Caco-2 (cell line): ENCODE measurements at regions of chr10 and their contacts with region 1.

Region 1: DNA sequence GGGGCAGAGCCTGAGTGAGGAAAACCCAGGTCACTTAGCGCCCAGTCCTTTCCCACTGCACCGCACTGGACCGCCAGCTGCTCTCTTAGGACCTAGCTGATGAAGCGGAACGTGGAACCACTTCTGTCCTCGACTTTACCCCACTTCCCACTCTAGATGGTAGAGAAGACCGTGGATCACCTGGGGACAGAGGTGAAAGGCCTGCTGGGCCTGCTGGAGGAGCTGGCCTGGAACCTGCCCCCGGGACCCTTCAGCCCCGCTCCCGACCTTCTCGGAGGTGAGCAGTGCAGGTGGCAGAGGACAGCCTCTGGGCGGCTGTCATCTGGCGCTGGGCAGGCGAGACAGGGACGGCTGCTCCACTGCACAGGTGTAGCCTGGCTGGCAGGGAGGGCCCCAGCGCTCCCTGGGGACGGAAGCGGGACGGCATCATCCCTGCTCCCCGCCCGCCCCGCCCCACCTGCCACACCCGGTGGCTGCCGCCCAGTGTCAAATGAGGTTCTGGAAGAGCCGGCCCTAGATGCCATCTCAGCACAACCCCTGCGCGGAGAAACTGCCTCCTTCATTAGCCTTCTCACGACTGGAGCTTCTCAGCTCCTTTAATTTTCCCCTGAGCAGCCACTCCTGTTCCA is 11.7 kb downstream of the PLAC9 start:
- DNase-seq: peak; percentile 60 to 70
- H3K4me3 ChIP-seq: peak overlapping the region; percentile 30
- H3K4me3 Mint-ChIP-seq: peak overlapping the region; percentile 74
- H3K27ac Mint-ChIP-seq: peak overlapping the region; percentile 79
- H3K4me1 ChIP-seq: no peaks in the 10 kb centered on the region
- H3K4me1 Mint-ChIP-seq: peaks cover 8% of the 10 kb centered on the region
- H3K27me3 ChIP-seq: no peaks in the 10 kb centered on the region
- H3K27me3 Mint-ChIP-seq: peaks cover 2% of the 10 kb centered on the region
- CTCF ChIP-seq: no peak

Region 2: GRCh38 chr10:79286318-79286951 is 857.7 kb before region 1 on chr10:
- CTCF ChIA-PET with region 1: no interaction called
- POLR2A ChIA-PET with region 1: no interaction called
- intact Hi-C with region 1: no loop called
- DNase-seq: no peak
- H3K4me3 ChIP-seq: no peak overlapping the region
- H3K4me3 Mint-ChIP-seq: no peak overlapping the region
- H3K27ac Mint-ChIP-seq: no peak overlapping the region
- H3K4me1 ChIP-seq: no peaks in the 10 kb centered on the region
- H3K4me1 Mint-ChIP-seq: no peaks in the 10 kb centered on the region
- H3K27me3 ChIP-seq: no peaks in the 10 kb centered on the region
- H3K27me3 Mint-ChIP-seq: no peaks in the 10 kb centered on the region
- CTCF ChIP-seq: no peak

Region 3: DNA sequence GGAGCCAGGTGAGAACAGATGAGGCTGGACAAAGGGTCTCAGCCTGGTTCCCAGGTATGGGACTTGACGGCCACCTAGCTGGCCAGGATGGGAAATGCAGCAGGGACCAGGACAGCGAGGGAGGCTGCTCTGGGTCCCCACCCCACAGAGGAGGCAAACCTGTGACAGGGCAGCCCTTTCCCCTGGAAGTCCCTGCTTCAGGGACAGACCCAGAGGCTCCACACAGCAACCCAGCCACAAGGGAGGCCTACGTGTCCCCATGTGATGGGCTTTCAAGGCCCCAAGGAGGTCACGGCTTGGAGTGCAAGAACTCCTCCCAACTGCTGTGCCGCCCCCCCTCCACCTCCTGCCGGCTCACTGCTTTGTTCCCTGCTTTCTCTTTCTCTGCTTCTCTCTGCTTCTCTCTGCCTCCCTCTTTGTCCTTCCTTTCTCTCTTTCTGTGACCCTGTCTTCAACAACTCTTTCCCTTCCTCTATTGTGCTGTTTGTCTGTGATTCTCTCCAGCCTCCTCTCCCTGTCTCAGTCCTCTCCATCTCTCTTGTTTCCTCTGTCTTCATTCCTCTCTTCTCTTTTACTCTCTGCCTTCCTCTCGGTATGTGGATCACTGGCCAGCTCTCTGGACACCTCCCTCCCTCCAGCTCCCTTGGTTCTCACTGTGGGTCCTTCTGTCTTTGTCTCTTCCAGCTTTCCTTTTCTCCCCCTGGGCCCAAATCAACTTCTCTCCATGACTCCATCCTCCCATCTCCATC is 641.4 kb before region 1 on chr10:
- CTCF ChIA-PET with region 1: no interaction called
- POLR2A ChIA-PET with region 1: no interaction called
- intact Hi-C with region 1: loop called (anchors 10 kb)
- DNase-seq: peak; percentile 72
- H3K4me3 ChIP-seq: no peak overlapping the region
- H3K4me3 Mint-ChIP-seq: no peak overlapping the region
- H3K27ac Mint-ChIP-seq: no peak overlapping the region
- H3K4me1 ChIP-seq: no peaks in the 10 kb centered on the region
- H3K4me1 Mint-ChIP-seq: peaks cover 7% of the 10 kb centered on the region
- H3K27me3 ChIP-seq: peaks cover 3% of the 10 kb centered on the region; the same call in 1 of the 2 replicates
- H3K27me3 Mint-ChIP-seq: peaks cover 33% of the 10 kb centered on the region
- CTCF ChIP-seq: peak; percentile 62 to 70

Region 4: DNA sequence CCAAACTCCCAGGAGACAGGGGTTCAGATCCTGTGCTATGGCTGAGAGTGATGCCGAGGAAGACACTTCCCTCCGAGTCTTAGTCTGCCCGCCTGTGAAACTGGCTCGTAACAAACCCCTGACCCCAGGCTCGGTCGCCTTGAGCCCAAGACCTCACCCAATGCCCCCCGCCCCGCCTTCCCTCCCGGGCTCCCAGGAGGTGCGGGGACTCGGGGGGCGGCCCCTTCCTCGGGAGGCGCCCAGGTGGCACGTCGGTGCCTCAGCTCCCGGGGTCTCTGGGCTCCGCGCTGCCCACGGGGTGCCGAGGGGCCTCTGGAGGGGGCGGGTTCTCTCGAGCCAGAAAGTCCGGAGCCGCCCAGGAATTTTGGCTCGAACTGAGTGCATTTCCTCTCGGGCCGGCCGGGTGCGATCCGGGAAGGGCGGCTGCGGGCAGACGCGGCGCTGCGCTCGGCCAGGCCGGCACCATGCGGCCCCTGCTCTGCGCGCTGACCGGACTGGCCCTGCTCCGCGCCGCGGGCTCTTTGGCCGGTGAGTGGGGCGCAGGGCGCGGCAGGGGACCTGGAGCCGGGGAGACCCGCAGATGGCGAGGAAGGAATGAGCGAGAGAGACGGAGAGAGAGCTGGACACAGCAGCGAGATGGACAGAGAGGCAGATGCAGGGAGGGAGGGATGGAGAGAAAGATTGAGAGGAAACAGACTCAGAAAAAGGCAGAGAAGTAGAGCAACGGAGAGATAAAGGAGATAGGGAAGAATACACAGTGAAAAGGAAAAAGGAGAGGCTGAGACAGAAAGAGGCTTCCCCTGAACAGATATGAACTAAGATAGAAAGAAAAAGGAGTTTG is 11.7 kb before region 1 on chr10 and contains the start of gene PLAC9:
- CTCF ChIA-PET with region 1: interaction called, 11 read pairs
- POLR2A ChIA-PET with region 1: no interaction called
- intact Hi-C with region 1: no loop called
- DNase-seq: no peak
- H3K4me3 ChIP-seq: no peak within 1 kb of the TSS
- H3K4me3 Mint-ChIP-seq: no peak within 1 kb of the TSS
- H3K27ac Mint-ChIP-seq: peak within 1 kb of the TSS; percentile 42
- H3K4me1 ChIP-seq: peaks cover 8% of the 10 kb centered on the region
- H3K4me1 Mint-ChIP-seq: peaks cover 16% of the 10 kb centered on the region
- H3K27me3 ChIP-seq: no peaks in the 10 kb centered on the region
- H3K27me3 Mint-ChIP-seq: no peaks in the 10 kb centered on the region
- CTCF ChIP-seq: no peak
- total RNA-seq, gene PLAC9: not detected in 2 replicates

Region 5: DNA sequence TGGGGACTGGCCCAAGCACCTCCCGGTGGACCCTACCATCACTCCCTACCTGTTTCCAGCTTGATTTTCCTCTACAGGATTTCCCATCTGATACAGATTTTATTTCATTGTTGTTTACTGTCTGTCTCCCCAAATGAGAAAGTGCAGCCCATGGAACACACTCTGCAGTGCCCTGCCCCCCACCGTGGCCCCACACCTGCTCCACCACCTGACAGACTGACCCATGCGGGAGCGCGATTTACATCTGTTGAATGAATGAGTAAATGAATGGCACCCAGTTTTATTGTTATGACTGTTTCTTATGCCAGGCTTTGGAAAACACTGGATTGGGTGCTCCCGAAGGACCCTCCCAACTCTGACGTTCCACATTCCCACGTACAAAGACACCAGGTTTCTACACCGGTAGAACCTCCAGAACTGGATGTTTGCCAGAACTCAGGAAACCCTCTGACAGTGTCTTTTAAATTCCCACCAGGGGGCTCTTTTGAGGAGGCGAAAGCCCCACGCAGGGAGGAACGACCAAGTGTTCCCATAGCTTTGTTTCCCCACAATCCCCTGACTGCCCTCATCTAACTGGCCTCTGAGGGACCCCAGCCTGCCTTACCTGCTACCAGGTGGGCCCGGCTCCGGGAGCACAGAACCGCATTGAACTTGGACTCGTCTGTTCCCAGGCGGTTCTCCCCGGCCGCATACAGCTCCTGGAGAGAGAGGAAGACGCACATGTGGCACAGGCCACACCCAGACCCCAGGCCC is 17.3 kb after region 1 on chr10:
- CTCF ChIA-PET with region 1: interaction called, 11 read pairs
- POLR2A ChIA-PET with region 1: no interaction called
- intact Hi-C with region 1: no loop called
- DNase-seq: peak in 1 of 2 experiments; percentile 44
- H3K4me3 ChIP-seq: no peak overlapping the region
- H3K4me3 Mint-ChIP-seq: no peak overlapping the region
- H3K27ac Mint-ChIP-seq: peak overlapping the region; percentile 29
- H3K4me1 ChIP-seq: no peaks in the 10 kb centered on the region; the same call in 1 of the 2 replicates
- H3K4me1 Mint-ChIP-seq: peaks cover 11% of the 10 kb centered on the region
- H3K27me3 ChIP-seq: no peaks in the 10 kb centered on the region
- H3K27me3 Mint-ChIP-seq: no peaks in the 10 kb centered on the region
- CTCF ChIP-seq: peak; percentile 37 to 47

Region 6: DNA sequence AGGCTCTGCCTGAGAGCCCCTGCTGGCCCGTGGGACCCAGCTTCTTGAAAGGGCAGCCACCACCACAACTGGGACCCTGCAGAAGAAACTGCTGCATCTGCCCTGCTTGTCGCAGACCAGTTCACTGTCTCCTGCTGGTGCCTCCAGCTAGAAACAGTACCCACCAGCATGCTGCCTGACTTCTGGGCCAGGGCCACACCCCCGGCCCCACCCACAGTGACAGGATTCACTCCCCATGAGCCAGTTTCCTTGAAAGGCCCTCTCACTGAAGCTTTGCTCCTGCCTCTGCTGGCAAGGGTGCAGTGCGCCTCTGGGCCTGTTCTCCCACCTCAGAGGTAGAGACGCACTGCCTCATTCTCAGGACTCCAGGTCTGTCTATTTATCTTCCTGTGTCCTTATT is 28.7 kb after region 1 on chr10:
- CTCF ChIA-PET with region 1: no interaction called
- POLR2A ChIA-PET with region 1: no interaction called
- intact Hi-C with region 1: no loop called
- DNase-seq: no peak
- H3K4me3 ChIP-seq: no peak overlapping the region
- H3K4me3 Mint-ChIP-seq: no peak overlapping the region
- H3K27ac Mint-ChIP-seq: peak overlapping the region; percentile 39
- H3K4me1 ChIP-seq: peaks cover 9% of the 10 kb centered on the region
- H3K4me1 Mint-ChIP-seq: peaks cover 34% of the 10 kb centered on the region
- H3K27me3 ChIP-seq: no peaks in the 10 kb centered on the region
- H3K27me3 Mint-ChIP-seq: no peaks in the 10 kb centered on the region
- CTCF ChIP-seq: no peak

Region 7: GRCh38 chr10:80205478-80206276 is 61.5 kb after region 1 on chr10 and contains the start of gene ANXA11:
- CTCF ChIA-PET with region 1: interaction called, 7 read pairs
- POLR2A ChIA-PET with region 1: interaction called, 4 read pairs
- intact Hi-C with region 1: loop called (anchors 5 kb)
- DNase-seq: peak; percentile 89 to 90
- H3K4me3 ChIP-seq: peak within 1 kb of the TSS; percentile 84
- H3K4me3 Mint-ChIP-seq: peak within 1 kb of the TSS; percentile 78
- H3K27ac Mint-ChIP-seq: peak within 1 kb of the TSS; percentile 100
- H3K4me1 ChIP-seq: peaks cover 48% of the 10 kb centered on the region
- H3K4me1 Mint-ChIP-seq: peaks cover 61% of the 10 kb centered on the region
- H3K27me3 ChIP-seq: no peaks in the 10 kb centered on the region
- H3K27me3 Mint-ChIP-seq: no peaks in the 10 kb centered on the region
- CTCF ChIP-seq: peak in 1 of 2 experiments; percentile 3
- total RNA-seq, gene ANXA11: 316 and 327 TPM in 2 replicates